ENCODE measurements at regions of chr1 and their contacts with region 1.

Region 1: GRCh38 chr1:171226747-171227370 is 21.4 kb upstream of the FMO1 start:
- DNase-seq: peak in 1 of 3 donors; percentile 56
- ATAC-seq: peak; percentile 90
- H3K4me3 ChIP-seq: no peak overlapping the region
- H3K4me1 ChIP-seq: no peaks in the 10 kb centered on the region
- CTCF ChIP-seq: peak; percentile 27

Region 2: DNA sequence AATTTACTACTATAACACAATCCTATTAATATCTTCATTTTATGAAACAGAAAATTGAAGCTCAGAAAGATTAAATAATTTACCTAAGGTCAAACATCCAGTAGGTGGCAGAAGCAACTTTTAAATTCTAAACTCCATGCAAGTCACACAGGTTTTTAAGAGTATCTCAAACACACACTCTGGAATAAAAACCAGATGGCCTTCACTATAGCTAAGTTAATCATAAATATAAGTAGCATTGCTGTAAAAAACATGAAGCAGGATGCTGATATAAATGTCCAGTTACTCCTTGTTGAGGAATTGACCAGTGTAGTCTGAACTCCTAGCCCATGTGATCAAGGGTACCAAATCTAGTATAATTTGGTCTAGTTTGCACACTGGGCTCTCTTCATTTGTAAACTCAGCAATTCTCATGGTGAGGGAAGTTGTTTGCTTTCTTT is 145.5 kb before region 1 on chr1:
- intact Hi-C with region 1: loop called in 1 of 2 experiments (anchors 2 kb)
- DNase-seq: peak in 1 of 3 donors; percentile 19
- ATAC-seq: peak; percentile 36
- H3K4me3 ChIP-seq: no peak overlapping the region
- H3K4me1 ChIP-seq: peaks cover 6% of the 10 kb centered on the region
- CTCF ChIP-seq: no peak